Activated T-helper 1 cell treated with anti-CD3 and anti-CD28 coated beads, Interleukin-12 subunit alpha, Interleukin-12 subunit beta, Interleukin-2, Interleukin-4 antibody, amounts not matched to agents 30 ng/mL and 10 ng/mL and 1 ng/mL, durations not matched to agents 14 hours and 24 hours and 36 hours (primary cell): ENCODE measurements at regions of chr1 and their contacts with region 1.

Region 1: DNA sequence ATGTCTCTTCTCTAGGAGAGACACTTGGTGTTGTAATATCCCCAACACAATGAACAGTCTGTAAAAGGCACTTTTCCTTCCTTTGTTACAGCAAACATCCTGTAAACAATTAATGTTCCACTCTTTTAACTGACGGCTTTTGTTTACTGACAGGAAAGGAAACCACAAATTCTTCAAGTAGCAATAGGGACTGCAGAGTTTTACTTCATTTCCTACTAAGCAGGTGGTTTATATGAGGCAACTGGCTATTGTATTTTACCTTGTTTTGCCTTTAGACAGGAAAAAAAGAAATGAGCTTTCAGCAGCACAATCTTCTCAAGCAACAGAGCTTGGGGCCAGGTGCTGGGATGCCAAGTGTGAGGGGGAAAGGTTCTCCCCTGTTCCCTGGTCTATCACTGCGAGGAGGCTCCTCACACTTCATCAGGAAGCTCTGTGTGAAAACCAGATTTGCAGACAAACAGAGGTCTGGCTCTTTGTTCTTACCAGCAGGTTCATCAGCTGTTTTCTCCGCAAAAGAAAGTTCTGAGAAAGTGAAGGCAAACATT is 51.2 kb downstream of the SIPA1L2 start:
- DNase-seq: peak; percentile 23
- H3K4me3 Mint-ChIP-seq: peak overlapping the region; percentile 64
- H3K27ac Mint-ChIP-seq: peak overlapping the region; percentile 79
- H3K4me1 Mint-ChIP-seq: peaks cover 63% of the 10 kb centered on the region
- H3K27me3 Mint-ChIP-seq: no peaks in the 10 kb centered on the region

Region 2: GRCh38 chr1:232477728-232478127 is 101.0 kb before region 1 on chr1:
- intact Hi-C with region 1: no loop called
- DNase-seq: no peak
- H3K4me3 Mint-ChIP-seq: no peak overlapping the region
- H3K27ac Mint-ChIP-seq: no peak overlapping the region
- H3K4me1 Mint-ChIP-seq: no peaks in the 10 kb centered on the region
- H3K27me3 Mint-ChIP-seq: peaks cover 24% of the 10 kb centered on the region

Region 3: GRCh38 chr1:232528472-232529089 is 50.1 kb before region 1 on chr1:
- intact Hi-C with region 1: loop called (anchors 5 kb)
- DNase-seq: no peak
- H3K4me3 Mint-ChIP-seq: peak overlapping the region; percentile 28
- H3K27ac Mint-ChIP-seq: peak overlapping the region; percentile 14
- H3K4me1 Mint-ChIP-seq: peaks cover 17% of the 10 kb centered on the region
- H3K27me3 Mint-ChIP-seq: peaks cover 21% of the 10 kb centered on the region

Region 4: GRCh38 chr1:232589812-232590743 is 11.4 kb after region 1 on chr1:
- intact Hi-C with region 1: loop called (anchors 1 kb)
- DNase-seq: no peak
- H3K4me3 Mint-ChIP-seq: no peak overlapping the region
- H3K27ac Mint-ChIP-seq: peak overlapping the region; percentile 27
- H3K4me1 Mint-ChIP-seq: peaks cover 54% of the 10 kb centered on the region
- H3K27me3 Mint-ChIP-seq: no peaks in the 10 kb centered on the region

Region 5: GRCh38 chr1:232596666-232597303 is 18.1 kb after region 1 on chr1:
- intact Hi-C with region 1: loop called (anchors 2 kb)
- DNase-seq: no peak
- H3K4me3 Mint-ChIP-seq: peak overlapping the region; percentile 15
- H3K27ac Mint-ChIP-seq: no peak overlapping the region
- H3K4me1 Mint-ChIP-seq: peaks cover 56% of the 10 kb centered on the region
- H3K27me3 Mint-ChIP-seq: no peaks in the 10 kb centered on the region